KBM-7 (cell line): ENCODE measurements at regions of chr16 and their contacts with region 1.

Region 1: DNA sequence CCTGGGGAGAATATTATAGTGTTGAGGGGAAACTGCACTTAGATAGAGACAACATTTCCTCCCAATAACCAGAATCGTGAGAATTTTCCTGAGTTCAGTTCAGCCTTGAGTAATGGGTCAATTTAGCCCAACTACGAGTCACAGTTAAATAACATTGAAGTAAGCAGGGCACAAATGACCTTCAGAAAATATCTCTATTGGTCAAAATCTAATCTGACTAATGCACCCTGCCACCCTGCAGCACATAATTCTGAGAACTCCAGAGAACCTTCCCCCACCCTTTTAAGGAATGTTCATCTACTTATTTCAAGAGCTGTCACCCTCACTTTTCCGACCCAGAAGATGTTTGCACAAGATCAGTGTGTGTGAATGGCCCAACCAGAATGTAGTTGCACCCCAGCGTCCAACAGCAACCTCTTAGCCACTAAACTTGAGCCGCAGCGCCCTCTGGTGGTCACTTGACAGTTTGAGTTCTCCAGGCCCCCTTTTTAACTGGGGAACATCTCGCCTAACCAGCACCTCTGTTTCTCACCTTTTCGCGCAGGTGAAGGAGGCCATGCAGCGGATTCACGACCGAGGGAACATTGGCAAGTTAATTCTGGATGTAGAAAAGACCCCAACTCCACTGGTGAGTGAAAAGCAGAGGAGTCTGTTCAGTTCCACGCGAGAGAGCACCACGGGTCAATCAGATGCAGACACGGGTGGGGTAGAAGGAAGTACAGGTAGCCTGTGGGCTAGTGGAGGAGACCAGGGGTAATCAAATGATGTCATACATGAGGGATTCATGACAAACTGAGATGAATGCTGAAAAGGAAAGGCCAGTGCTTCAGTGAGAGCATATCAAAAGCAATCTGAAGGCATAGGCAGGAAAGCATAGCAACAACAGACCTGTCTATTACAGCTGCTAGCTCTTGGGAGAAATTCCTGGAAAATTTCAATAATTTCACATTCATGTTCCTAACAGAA is 50.8 kb upstream of the CLEC3A start:
- DNase-seq: peak; percentile 68

Region 2: GRCh38 chr16:77675464-77676324 is 295.9 kb before region 1 on chr16:
- in situ Hi-C with region 1: loop called (anchors 10 kb)
- DNase-seq: peak; percentile 90

Region 3: GRCh38 chr16:77877712-77878347 is 93.8 kb before region 1 on chr16:
- in situ Hi-C with region 1: no loop called
- DNase-seq: no peak